Esophagus muscularis mucosa (tissue), 4 donors: ENCODE measurements at regions of chr5 and their contacts with region 1.

Region 1: GRCh38 chr5:77076961-77077823 is 9.9 kb downstream of the ZBED3 start:
- DNase-seq: no peak
- H3K4me3 ChIP-seq: peak overlapping the region; percentile 64 to 77 (median 66)
- H3K27ac ChIP-seq: peak overlapping the region; percentile 76 to 85 (median 78)
- H3K4me1 ChIP-seq: peaks cover 4 to 18% (median 12%) of the 10 kb centered on the region in 4 donors
- H3K27me3 ChIP-seq: no peaks in the 10 kb centered on the region
- CTCF ChIP-seq: peak; percentile 68 to 79 (median 73)
- EP300 ChIP-seq: no peak
- POLR2A ChIP-seq: no peak

Region 2: DNA sequence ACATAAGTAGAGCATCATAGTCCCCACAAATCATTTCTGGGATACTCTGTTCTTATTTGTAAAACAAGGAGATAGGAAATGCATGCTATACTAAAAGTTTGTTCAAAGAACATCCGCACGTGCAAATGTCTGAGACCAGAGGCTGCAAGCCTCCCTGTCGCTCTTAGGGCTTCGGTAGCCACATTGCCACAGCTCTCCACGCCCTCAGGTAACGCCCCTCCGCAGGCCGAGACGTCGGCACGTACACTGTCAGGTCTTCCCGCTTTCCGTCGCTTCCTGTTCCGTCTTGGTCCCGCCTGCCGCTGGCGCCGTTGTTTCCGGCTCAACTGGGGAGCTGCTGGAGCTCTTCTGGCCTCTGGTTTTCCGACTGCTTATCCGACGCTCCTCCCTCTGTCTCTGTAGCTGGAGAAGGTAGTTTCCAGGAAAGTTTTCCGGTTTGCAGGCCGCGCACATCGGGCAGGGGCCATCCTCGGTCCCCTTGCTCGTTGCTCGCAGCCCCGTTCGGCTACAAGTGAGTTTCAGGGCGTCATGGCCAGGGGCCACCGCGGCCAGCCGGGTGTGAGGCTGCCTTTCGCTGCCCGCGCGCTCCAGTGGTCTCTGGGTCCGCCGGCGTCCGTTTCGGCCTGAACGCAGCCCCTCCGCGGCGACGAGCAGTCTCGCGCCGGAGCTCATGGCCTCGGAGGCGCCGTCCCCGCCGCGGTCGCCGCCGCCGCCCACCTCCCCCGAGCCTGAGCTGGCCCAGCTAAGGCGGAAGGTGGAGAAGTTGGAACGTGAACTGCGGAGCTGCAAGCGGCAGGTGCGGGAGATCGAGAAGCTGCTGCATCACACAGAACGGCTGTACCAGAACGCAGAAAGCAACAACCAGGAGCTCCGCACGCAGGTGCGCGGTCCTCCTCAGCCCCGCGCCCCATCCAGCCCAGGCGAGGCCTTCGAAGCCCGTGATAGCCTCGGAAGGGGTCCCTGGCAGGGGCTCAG is 46.8 kb before region 1 on chr5 and contains the start of gene AGGF1:
- intact Hi-C with region 1: loop called (anchors 5 kb)
- DNase-seq: peak; percentile 95
- H3K4me3 ChIP-seq: peak within 1 kb of the TSS; percentile 70 to 95 (median 92)
- H3K27ac ChIP-seq: peak within 1 kb of the TSS; percentile 89 to 96 (median 91)
- H3K4me1 ChIP-seq: peaks cover 9 to 37% (median 31%) of the 10 kb centered on the region in 4 donors
- H3K27me3 ChIP-seq: no peaks in the 10 kb centered on the region
- CTCF ChIP-seq: no peak
- EP300 ChIP-seq: no peak
- POLR2A ChIP-seq: no peak
- total RNA-seq, gene AGGF1: 16.4 to 25.0 (median 22.7) TPM

Region 3: DNA sequence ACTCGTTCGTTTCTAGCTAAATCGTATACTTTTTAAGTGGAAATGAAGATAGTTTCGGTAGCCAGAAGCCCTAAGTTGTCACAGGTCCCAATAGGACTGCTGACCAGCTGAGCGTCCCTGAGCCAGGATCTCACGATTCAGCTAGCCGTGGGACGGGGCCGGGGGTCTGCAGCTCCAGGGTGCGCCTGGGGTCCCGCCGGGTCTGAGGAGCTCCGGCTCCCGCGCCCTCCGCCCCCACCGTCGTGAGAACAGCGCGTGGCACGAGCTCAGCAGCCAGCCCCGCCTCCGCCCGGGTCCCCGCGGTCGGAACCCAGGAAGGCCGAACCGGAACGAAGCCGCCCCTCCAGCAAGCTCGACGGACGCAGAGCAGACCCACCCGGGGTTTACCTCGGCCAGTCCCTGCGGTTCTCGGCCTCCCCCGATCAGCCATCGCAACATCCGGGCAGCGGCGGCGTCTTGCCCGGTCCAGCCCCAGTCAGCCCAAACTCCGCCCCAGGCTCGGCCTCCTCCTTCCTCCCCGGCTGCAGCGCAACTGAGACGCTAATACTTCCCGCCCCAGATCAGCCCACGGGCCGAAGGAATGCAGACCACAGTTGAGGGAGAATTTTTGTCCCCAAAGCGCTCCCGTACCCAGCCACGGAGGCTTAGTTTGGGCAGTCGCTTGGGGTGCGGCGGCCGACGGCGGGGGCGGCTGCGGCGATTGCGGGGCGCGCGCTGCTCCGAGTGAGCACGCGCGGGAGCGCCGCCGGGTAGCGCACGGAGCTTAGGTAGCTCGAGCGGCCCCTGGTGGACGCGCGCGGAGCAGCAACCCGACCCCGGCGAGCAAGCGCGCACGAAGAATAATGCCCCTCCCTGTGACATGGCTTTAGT is 414.8 kb after region 1 on chr5 and contains the start of gene WDR41:
- intact Hi-C with region 1: loop called (anchors 5 kb)
- DNase-seq: peak; percentile 98
- H3K4me3 ChIP-seq: peak within 1 kb of the TSS; percentile 73 to 93 (median 82)
- H3K27ac ChIP-seq: peak within 1 kb of the TSS; percentile 93 to 97 (median 94)
- H3K4me1 ChIP-seq: peaks cover 3 to 18% (median 17%) of the 10 kb centered on the region in 4 donors
- H3K27me3 ChIP-seq: peaks cover 0 to 4% (median 0%) of the 10 kb centered on the region in 4 donors
- CTCF ChIP-seq: peak in 2 of 3 experiments; percentile 88 to 99
- EP300 ChIP-seq: no peak
- POLR2A ChIP-seq: no peak
- total RNA-seq, gene WDR41: 18.8 to 56.1 (median 33.2) TPM